ENCODE measurements at regions of chr20 and their contacts with region 1.

Region 1: GRCh38 chr20:17898548-17898994 is 70.0 kb downstream of the SNX5 start:
- DNase-seq: peak; percentile 80
- ATAC-seq: peak; percentile 10; the same call in 2 of the 3 replicates
- H3K4me3 ChIP-seq: no peak overlapping the region
- H3K27ac ChIP-seq: no peak overlapping the region
- H3K4me1 ChIP-seq: peaks cover 52% of the 10 kb centered on the region
- H3K27me3 ChIP-seq: peaks cover 0 to 16% of the 10 kb centered on the region in 2 experiments; a peak in 4 of 5 replicates
- CTCF ChIP-seq: peak; percentile 98
- EP300 ChIP-seq: 0 out of 4 replicates have a peak, but pooled peaks of 1 of the 2 experiments have one; percentile 24
- POLR2A ChIP-seq: no peak
- RAD21 ChIP-seq: peak; percentile 99

Region 2: GRCh38 chr20:17710379-17711266 is 187.9 kb before region 1 on chr20:
- CTCF ChIA-PET with region 1: interaction called, 4 read pairs
- POLR2A ChIA-PET with region 1: interaction called, 6 read pairs
- in situ Hi-C with region 1: no loop called
- intact Hi-C with region 1: loop called (anchors 1 kb)
- DNase-seq: peak; percentile 92
- ATAC-seq: peak; percentile 93
- H3K4me3 ChIP-seq: peak overlapping the region; percentile 36 to 70 (median 54)
- H3K27ac ChIP-seq: peak overlapping the region; percentile 43
- H3K4me1 ChIP-seq: peaks cover 75% of the 10 kb centered on the region
- H3K27me3 ChIP-seq: peaks cover 2 to 23% of the 10 kb centered on the region in 2 experiments; a peak in 2 of 5 replicates
- CTCF ChIP-seq: 0 out of 2 replicates have a peak, but pooled peaks have one; percentile 6
- EP300 ChIP-seq: peak in 1 of 2 experiments; percentile 66; a peak in 2 of 4 replicates
- POLR2A ChIP-seq: peak; percentile 59 to 61; a peak in 3 of 4 replicates
- RAD21 ChIP-seq: peak; percentile 31; the same call in 1 of the 2 replicates

Region 3: DNA sequence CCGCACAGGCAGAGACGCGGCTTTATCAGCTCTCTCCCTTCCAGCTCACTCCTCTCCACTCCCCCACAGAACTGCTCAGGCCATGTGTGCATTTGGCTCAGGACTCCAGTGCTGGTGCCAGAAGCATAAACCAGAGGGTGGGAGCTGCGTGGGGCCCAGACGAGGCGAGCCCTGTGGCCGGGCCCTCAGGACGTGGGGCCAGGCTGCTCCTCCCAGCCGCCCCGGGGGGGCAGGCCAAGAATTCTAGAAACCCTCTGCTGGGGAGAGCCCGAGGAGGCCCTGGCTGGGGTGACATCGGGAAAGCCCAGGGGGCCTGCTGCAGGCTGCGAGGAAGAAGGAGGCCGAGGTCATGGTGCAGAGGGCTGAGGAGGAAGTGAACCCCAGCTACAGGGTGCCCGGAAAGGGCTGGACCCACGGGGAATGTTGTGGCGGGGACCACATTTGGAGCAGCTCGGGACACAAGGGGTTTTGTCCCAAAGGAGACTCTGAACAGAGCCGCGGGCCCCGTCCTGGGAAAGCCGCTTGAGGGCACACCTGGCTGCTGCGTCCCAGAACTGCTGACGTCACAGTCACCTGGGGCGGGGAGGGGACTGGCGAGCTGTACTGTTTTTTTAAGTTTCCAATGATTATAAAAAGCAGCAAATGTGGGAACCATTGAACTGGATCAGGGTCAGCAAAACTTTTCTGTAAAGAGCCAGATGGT is 91.7 kb before region 1 on chr20:
- CTCF ChIA-PET with region 1: interaction called, 3 read pairs
- POLR2A ChIA-PET with region 1: interaction called, 4 read pairs
- in situ Hi-C with region 1: no loop called
- intact Hi-C with region 1: loop called (anchors 5 kb)
- DNase-seq: no peak
- ATAC-seq: peak; percentile 24
- H3K4me3 ChIP-seq: peak overlapping the region in 2 of 3 experiments; percentile 16 to 49; a peak in 1 of 6 replicates
- H3K27ac ChIP-seq: no peak overlapping the region
- H3K4me1 ChIP-seq: peaks cover 83% of the 10 kb centered on the region
- H3K27me3 ChIP-seq: peaks cover 0 to 1% of the 10 kb centered on the region in 2 experiments; a peak in 2 of 5 replicates
- CTCF ChIP-seq: peak; percentile 54
- EP300 ChIP-seq: no peak
- POLR2A ChIP-seq: no peak
- RAD21 ChIP-seq: no peak

Region 4: GRCh38 chr20:17859616-17860232 is 38.8 kb before region 1 on chr20:
- CTCF ChIA-PET with region 1: no interaction called
- POLR2A ChIA-PET with region 1: interaction called, 724 read pairs
- in situ Hi-C with region 1: no loop called
- intact Hi-C with region 1: loop called (anchors 1 kb)
- DNase-seq: no peak
- ATAC-seq: no peak; the same call in 1 of the 3 replicates
- H3K4me3 ChIP-seq: peak overlapping the region in 1 of 3 experiments; percentile 17; a peak in 2 of 6 replicates
- H3K27ac ChIP-seq: peak overlapping the region; percentile 86
- H3K4me1 ChIP-seq: peaks cover 100% of the 10 kb centered on the region
- H3K27me3 ChIP-seq: no peaks in the 10 kb centered on the region
- CTCF ChIP-seq: peak; percentile 53
- EP300 ChIP-seq: no peak
- POLR2A ChIP-seq: no peak
- RAD21 ChIP-seq: peak; percentile 34; the same call in 1 of the 2 replicates

Region 5: DNA sequence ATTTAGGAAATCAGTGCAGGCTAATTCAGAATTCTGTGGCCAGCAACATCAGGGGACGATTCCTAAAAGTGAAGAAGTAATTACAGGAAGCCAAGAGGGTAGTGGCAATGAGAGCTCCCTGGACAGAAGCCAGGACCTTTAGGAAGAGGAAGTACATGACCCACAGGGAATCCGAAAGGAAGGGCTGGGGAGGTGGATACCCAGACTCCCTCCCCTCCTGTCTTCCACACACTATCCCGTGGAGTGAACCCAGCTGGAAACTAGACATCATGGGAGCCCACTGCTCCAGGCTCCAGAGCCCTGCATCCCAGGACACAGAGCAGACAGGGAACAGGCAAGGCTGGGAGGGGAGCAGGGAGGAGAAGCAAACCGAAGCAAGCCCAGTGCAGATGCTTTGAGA is 13.0 kb before region 1 on chr20:
- CTCF ChIA-PET with region 1: no interaction called
- POLR2A ChIA-PET with region 1: interaction called, 32 read pairs
- in situ Hi-C with region 1: no loop called
- intact Hi-C with region 1: loop called (anchors 1 kb)
- DNase-seq: no peak
- ATAC-seq: no peak
- H3K4me3 ChIP-seq: no peak overlapping the region
- H3K27ac ChIP-seq: no peak overlapping the region
- H3K4me1 ChIP-seq: peaks cover 83% of the 10 kb centered on the region
- H3K27me3 ChIP-seq: no peaks in the 10 kb centered on the region
- CTCF ChIP-seq: no peak
- EP300 ChIP-seq: no peak
- POLR2A ChIP-seq: no peak
- RAD21 ChIP-seq: no peak